Calu3 (cell line): ENCODE measurements at regions of chr1 and their contacts with region 1.

Region 1: GRCh38 chr1:117059678-117060440 is at the start of gene TTF2:
- DNase-seq: peak; percentile 91
- H3K4me3 Mint-ChIP-seq: no peak within 1 kb of the TSS
- H3K27ac Mint-ChIP-seq: no peak within 1 kb of the TSS
- H3K4me1 Mint-ChIP-seq: no peaks in the 10 kb centered on the region
- H3K27me3 Mint-ChIP-seq: no peaks in the 10 kb centered on the region
- CTCF ChIP-seq: no peak
- total RNA-seq, gene TTF2: 46.6 and 49.6 TPM in 2 replicates

Region 2: GRCh38 chr1:116724765-116725375 is 335.0 kb before region 1 on chr1:
- CTCF ChIA-PET with region 1: no interaction called
- intact Hi-C with region 1: loop called (anchors 5 kb)
- DNase-seq: peak; percentile 74
- H3K4me3 Mint-ChIP-seq: no peak overlapping the region
- H3K27ac Mint-ChIP-seq: no peak overlapping the region
- H3K4me1 Mint-ChIP-seq: no peaks in the 10 kb centered on the region
- H3K27me3 Mint-ChIP-seq: peaks cover 35% of the 10 kb centered on the region
- CTCF ChIP-seq: peak; percentile 16

Region 3: DNA sequence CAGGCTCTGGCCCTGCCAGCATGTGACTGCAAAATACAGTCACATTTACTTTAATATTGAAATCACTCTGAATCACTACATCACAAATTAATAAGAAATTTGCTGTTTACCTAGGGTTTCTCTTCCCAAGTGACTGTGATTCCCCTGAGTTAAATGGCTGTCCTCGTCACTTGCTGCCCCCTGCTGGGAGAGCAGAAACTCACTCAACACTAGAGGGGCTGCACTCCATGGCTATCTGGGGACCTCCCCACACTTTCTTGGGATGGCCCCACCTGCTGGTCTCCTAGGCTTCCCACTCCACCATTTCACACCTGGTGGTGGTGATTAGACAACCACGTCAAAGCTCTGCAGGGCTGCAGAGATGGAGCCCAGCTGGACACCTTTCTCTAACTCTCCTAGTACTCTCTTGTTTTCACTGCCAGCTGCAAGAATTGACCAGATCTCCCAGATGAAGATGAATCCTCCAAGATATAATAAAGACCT is 242.2 kb before region 1 on chr1:
- CTCF ChIA-PET with region 1: interaction called, 4 read pairs
- intact Hi-C with region 1: loop called (anchors 5 kb)
- DNase-seq: peak; percentile 79
- H3K4me3 Mint-ChIP-seq: no peak overlapping the region
- H3K27ac Mint-ChIP-seq: no peak overlapping the region
- H3K4me1 Mint-ChIP-seq: no peaks in the 10 kb centered on the region
- H3K27me3 Mint-ChIP-seq: no peaks in the 10 kb centered on the region
- CTCF ChIP-seq: peak; percentile 83

Region 4: GRCh38 chr1:116934586-116935207 is 125.2 kb before region 1 on chr1:
- CTCF ChIA-PET with region 1: no interaction called
- intact Hi-C with region 1: loop called (anchors 10 kb)
- DNase-seq: no peak
- H3K4me3 Mint-ChIP-seq: no peak overlapping the region
- H3K27ac Mint-ChIP-seq: no peak overlapping the region
- H3K4me1 Mint-ChIP-seq: peaks cover 7% of the 10 kb centered on the region
- H3K27me3 Mint-ChIP-seq: no peaks in the 10 kb centered on the region
- CTCF ChIP-seq: peak; percentile 31